ENCODE measurements at regions of chr7 and their contacts with region 1.

Region 1: GRCh38 chr7:18345641-18346234 is 149.8 kb upstream of the HDAC9 start:
- DNase-seq: peak; percentile 78
- H3K4me3 Mint-ChIP-seq: no peak overlapping the region
- H3K27ac Mint-ChIP-seq: no peak overlapping the region
- H3K4me1 Mint-ChIP-seq: no peaks in the 10 kb centered on the region
- H3K27me3 Mint-ChIP-seq: no peaks in the 10 kb centered on the region
- CTCF ChIP-seq: peak; percentile 74

Region 2: DNA sequence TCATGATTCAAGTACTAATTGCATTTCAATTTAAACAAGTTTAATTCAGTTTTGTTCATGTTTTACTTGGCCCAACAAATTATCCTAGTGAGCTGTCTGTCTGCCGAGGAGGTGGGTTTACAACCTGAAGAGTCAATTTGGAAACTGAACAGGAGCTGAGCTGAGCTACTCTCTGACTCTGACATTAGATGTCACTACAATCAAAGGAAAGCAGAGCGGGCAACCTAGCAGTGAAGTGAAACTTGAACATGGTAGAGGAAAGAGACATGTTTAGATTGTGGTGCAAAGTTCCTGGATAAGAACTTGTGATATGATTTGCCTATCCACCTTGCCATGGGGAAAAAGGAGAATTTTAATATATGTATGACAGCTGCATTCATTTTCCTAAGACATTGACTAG is 1454.4 kb before region 1 on chr7:
- CTCF ChIA-PET with region 1: interaction called, 3 read pairs
- POLR2A ChIA-PET with region 1: no interaction called
- intact Hi-C with region 1: loop called (anchors 1 kb)
- DNase-seq: peak; percentile 74
- H3K4me3 Mint-ChIP-seq: no peak overlapping the region
- H3K27ac Mint-ChIP-seq: no peak overlapping the region
- H3K4me1 Mint-ChIP-seq: peaks cover 5% of the 10 kb centered on the region
- H3K27me3 Mint-ChIP-seq: no peaks in the 10 kb centered on the region
- CTCF ChIP-seq: peak; percentile 68

Region 3: GRCh38 chr7:17706734-17707133 is 639.0 kb before region 1 on chr7:
- CTCF ChIA-PET with region 1: interaction called, 8 read pairs
- POLR2A ChIA-PET with region 1: interaction called, 3 read pairs
- intact Hi-C with region 1: loop called (anchors 1 kb)
- DNase-seq: peak; percentile 83
- H3K4me3 Mint-ChIP-seq: no peak overlapping the region
- H3K27ac Mint-ChIP-seq: peak overlapping the region; percentile 55
- H3K4me1 Mint-ChIP-seq: peaks cover 7% of the 10 kb centered on the region
- H3K27me3 Mint-ChIP-seq: no peaks in the 10 kb centered on the region
- CTCF ChIP-seq: peak; percentile 67

Region 4: GRCh38 chr7:17971411-17971810 is 374.3 kb before region 1 on chr7:
- CTCF ChIA-PET with region 1: interaction called, 4 read pairs
- POLR2A ChIA-PET with region 1: no interaction called
- intact Hi-C with region 1: loop called (anchors 1 kb)
- DNase-seq: peak; percentile 4
- H3K4me3 Mint-ChIP-seq: no peak overlapping the region
- H3K27ac Mint-ChIP-seq: no peak overlapping the region
- H3K4me1 Mint-ChIP-seq: no peaks in the 10 kb centered on the region
- H3K27me3 Mint-ChIP-seq: no peaks in the 10 kb centered on the region
- CTCF ChIP-seq: peak; percentile 30

Region 5: DNA sequence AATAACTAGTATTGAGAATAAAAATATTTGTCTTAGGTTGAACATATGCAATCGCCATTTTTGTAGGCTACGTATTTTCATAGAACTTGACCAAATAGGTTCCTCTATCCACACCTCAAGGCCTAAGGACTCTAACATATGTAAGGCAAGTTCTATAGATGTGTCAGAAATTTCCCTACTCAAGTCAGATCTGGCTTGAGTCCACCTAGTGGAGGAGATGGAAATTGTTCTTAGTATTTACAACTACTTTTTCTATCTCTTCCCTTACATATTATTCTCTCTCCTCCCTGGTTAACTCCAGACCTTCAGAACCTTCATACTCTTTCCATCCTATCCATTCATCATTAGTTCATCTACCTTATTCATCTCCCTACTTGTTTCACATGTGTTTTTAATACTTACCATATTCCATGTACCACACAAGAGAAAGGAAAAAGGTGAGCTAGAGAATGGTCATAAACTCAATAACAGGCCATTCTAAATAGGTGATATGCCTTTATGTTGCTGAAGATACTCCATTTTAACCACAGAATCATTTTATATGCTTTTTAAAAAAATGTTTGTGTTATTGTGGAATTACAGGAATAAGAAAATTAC is 24.7 kb before region 1 on chr7:
- CTCF ChIA-PET with region 1: interaction called, 11 read pairs
- POLR2A ChIA-PET with region 1: interaction called, 3 read pairs
- intact Hi-C with region 1: no loop called
- DNase-seq: peak; percentile 58
- H3K4me3 Mint-ChIP-seq: no peak overlapping the region
- H3K27ac Mint-ChIP-seq: no peak overlapping the region
- H3K4me1 Mint-ChIP-seq: peaks cover 9% of the 10 kb centered on the region
- H3K27me3 Mint-ChIP-seq: no peaks in the 10 kb centered on the region
- CTCF ChIP-seq: peak; percentile 47

Measured in MCF 10A (cell line).